HEK293T (cell line): ENCODE measurements at regions of chr4 and their contacts with region 1.

Region 1: GRCh38 chr4:42568610-42569207 is 88.2 kb downstream of the ATP8A1 start:
- DNase-seq: peak; percentile 57

Region 2: GRCh38 chr4:42605264-42605663 is 36.6 kb after region 1 on chr4:
- CTCF ChIA-PET with region 1: no interaction called
- POLR2A ChIA-PET with region 1: no interaction called
- DNase-seq: no peak

Region 3: GRCh38 chr4:42865572-42866189 is 297.0 kb after region 1 on chr4:
- CTCF ChIA-PET with region 1: interaction called, 11 read pairs
- POLR2A ChIA-PET with region 1: no interaction called
- DNase-seq: peak; percentile 43